ENCODE measurements at regions of chr3 and their contacts with region 1.

Region 1: DNA sequence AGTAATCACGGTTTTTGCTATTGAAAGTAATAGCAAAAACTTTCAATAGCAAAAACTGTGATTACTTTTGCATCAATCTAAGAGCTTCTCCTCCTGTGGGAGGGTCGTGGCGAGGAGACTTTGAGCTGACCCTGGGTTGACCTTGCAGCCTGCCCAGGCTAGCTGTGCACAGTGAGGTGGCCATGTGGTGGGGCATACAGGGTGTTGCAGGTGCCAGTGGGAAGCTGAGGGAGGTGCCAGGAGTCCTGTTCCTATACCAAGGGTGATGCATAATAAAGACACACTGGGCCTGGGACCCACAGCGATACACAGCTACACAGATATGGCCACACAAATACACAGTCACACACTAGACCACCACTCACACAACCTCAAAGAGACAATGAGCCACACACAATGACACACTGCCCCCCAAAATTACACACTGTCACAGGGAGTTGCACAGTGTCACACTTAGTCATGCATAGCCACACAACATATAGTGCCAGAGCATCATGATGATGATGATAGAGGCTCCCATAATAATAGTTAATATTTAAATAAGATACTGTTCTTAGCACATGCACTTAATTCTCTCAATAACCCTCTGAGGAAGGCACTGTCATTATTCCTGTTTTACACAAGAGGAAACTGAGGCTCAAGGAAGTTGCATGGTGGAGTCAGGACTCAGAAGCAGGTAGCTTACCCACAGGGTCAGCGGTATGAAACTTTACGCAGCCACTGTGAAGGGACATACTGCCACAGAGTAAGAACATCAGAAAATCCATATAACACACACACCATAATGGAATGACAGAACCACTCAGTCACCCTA is 6.3 kb downstream of the PLCD1 start:
- DNase-seq: no peak
- H3K4me3 Mint-ChIP-seq: peak overlapping the region; percentile 86
- H3K27ac Mint-ChIP-seq: peak overlapping the region; percentile 95
- H3K4me1 Mint-ChIP-seq: peaks cover 29% of the 10 kb centered on the region
- H3K27me3 Mint-ChIP-seq: peaks cover 6% of the 10 kb centered on the region

Region 2: DNA sequence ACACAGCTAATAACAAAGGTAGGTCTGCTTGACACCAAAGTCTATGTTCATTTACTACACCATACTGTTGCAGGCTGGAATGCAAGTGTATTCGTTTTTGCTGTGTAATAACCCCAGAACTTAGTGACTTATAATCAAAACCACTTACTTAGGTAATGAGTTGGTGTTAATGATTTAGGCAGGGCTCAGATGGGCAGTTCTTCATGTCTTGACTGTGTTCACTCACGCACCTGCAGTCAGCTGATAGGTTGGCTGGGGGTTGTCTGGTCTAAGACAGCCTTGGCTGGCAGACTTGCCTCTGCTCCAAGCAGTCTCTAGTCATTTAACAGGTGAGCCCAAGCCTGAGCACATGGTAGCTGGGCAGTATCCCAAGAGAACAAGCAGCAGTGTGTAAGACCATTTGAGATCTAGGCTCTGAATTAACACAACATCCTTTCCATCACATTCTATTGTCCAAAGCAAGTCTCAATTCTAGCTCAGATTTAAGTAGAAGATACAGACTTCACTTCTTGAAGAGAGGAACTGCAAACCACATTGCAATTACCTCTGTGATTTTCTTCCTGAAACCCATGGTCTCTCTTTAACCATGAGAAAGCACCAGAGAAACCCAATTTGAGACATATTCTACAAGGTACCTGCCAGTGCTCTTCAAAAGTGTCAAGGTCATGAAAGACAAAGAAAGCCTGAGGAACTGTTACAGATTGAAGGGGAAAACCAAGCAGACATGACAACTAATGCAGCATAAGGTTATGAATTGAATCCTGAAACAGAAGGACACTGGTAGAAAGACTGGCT is 1245.5 kb before region 1 on chr3:
- CTCF ChIA-PET with region 1: no interaction called
- POLR2A ChIA-PET with region 1: no interaction called
- DNase-seq: no peak
- H3K4me3 Mint-ChIP-seq: no peak overlapping the region
- H3K27ac Mint-ChIP-seq: no peak overlapping the region
- H3K4me1 Mint-ChIP-seq: no peaks in the 10 kb centered on the region
- H3K27me3 Mint-ChIP-seq: peaks cover 26% of the 10 kb centered on the region

Region 3: DNA sequence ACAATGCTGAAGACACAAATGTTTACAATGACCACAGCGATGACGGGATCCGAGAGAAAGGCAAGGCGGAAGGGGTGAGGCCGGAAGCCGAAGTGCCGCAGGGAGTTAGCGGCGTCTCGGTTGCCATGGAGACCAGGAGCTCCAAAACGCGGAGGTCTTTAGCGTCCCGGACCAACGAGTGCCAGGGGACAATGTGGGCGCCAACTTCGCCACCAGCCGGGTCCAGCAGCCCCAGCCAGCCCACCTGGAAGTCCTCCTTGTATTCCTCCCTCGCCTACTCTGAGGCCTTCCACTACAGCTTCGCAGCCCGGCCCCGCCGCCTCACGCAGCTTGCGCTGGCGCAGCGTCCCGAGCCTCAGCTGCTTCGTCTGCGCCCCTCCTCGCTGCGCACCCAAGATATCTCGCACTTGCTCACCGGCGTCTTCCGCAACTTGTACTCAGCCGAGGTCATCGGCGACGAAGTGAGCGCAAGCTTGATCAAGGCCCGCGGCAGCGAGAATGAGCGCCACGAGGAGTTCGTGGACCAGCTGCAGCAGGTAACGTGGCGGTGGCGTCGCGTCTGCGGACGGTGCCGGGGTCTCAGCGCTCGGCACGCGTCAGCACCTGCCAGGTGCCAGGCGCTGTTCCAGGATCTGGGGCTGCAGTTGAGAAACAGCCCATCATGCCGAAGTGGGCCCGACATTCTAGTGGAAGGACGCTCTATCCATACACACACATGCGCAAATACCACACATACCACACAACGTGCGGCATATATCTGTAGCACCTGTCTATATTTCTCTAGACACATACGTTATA is 16.2 kb after region 1 on chr3 and contains the start of gene DLEC1:
- CTCF ChIA-PET with region 1: interaction called, 9 read pairs
- POLR2A ChIA-PET with region 1: interaction called, 13 read pairs
- DNase-seq: peak; percentile 94
- H3K4me3 Mint-ChIP-seq: peak within 1 kb of the TSS; percentile 54
- H3K27ac Mint-ChIP-seq: peak within 1 kb of the TSS; percentile 98
- H3K4me1 Mint-ChIP-seq: peaks cover 37% of the 10 kb centered on the region
- H3K27me3 Mint-ChIP-seq: no peaks in the 10 kb centered on the region
- total RNA-seq, gene DLEC1: 3.8 to 4.2 TPM